Activated T-helper 2 cell treated with anti-CD3 and anti-CD28 coated beads, Interferon-gamma antibody, Interleukin-2, Interleukin-4, amounts not matched to agents 10 μg/mL and 5 μg/mL and 100 μg/mL, durations not matched to agents 14 hours and 24 hours and 36 hours (primary cell): ENCODE measurements at regions of chr3 and their contacts with region 1.

Region 1: GRCh38 chr3:157618075-157618760 is 115.0 kb upstream of the VEPH1 start:
- DNase-seq: no peak
- H3K4me3 Mint-ChIP-seq: no peak overlapping the region
- H3K27ac Mint-ChIP-seq: no peak overlapping the region
- H3K4me1 Mint-ChIP-seq: peaks cover 6% of the 10 kb centered on the region
- H3K27me3 Mint-ChIP-seq: peaks cover 11% of the 10 kb centered on the region

Region 2: GRCh38 chr3:157460253-157460652 is 158.0 kb before region 1 on chr3:
- intact Hi-C with region 1: no loop called
- DNase-seq: no peak
- H3K4me3 Mint-ChIP-seq: no peak overlapping the region
- H3K27ac Mint-ChIP-seq: no peak overlapping the region
- H3K4me1 Mint-ChIP-seq: no peaks in the 10 kb centered on the region
- H3K27me3 Mint-ChIP-seq: peaks cover 2% of the 10 kb centered on the region

Region 3: GRCh38 chr3:158103081-158103886 is 485.1 kb after region 1 on chr3:
- intact Hi-C with region 1: loop called (anchors 5 kb)
- DNase-seq: no peak
- H3K4me3 Mint-ChIP-seq: no peak overlapping the region
- H3K27ac Mint-ChIP-seq: peak overlapping the region; percentile 71
- H3K4me1 Mint-ChIP-seq: peaks cover 31% of the 10 kb centered on the region
- H3K27me3 Mint-ChIP-seq: peaks cover 90% of the 10 kb centered on the region

Region 4: GRCh38 chr3:158167737-158168471 is 549.7 kb after region 1 on chr3:
- intact Hi-C with region 1: no loop called
- DNase-seq: no peak
- H3K4me3 Mint-ChIP-seq: no peak overlapping the region
- H3K27ac Mint-ChIP-seq: no peak overlapping the region
- H3K4me1 Mint-ChIP-seq: peaks cover 7% of the 10 kb centered on the region
- H3K27me3 Mint-ChIP-seq: no peaks in the 10 kb centered on the region

Region 5: DNA sequence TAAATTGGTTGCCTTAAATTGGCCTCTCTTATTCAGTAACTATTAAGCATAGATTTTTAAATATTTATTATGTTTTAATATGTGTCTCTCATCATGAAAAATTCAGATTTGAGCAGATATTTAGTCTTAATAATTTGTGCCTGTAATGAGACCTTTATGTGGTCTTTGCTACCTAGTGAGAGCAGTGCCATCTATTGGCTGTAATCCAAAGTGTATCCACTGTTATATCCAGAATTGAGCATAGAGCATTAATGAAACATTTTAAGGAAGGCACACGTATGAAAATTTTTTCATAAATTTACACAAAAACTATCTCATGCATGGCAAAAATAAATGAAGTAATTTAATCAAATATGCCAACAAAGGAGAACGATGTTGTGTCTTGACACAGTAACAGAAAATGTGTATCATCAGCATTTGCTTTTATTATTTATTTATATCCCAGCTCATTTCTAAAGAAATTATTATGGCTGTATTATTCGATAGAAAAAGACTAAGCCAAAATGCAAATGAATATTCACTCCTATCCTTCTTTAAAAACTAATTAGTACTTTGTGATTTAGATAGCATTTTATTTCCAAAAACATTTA is 695.2 kb after region 1 on chr3:
- intact Hi-C with region 1: loop called (anchors 5 kb)
- DNase-seq: no peak
- H3K4me3 Mint-ChIP-seq: no peak overlapping the region
- H3K27ac Mint-ChIP-seq: no peak overlapping the region
- H3K4me1 Mint-ChIP-seq: no peaks in the 10 kb centered on the region
- H3K27me3 Mint-ChIP-seq: no peaks in the 10 kb centered on the region

Region 6: GRCh38 chr3:158434412-158435038 is 816.3 kb after region 1 on chr3:
- intact Hi-C with region 1: loop called (anchors 1 kb)
- DNase-seq: peak; percentile 9
- H3K4me3 Mint-ChIP-seq: no peak overlapping the region
- H3K27ac Mint-ChIP-seq: no peak overlapping the region
- H3K4me1 Mint-ChIP-seq: no peaks in the 10 kb centered on the region
- H3K27me3 Mint-ChIP-seq: no peaks in the 10 kb centered on the region

Region 7: GRCh38 chr3:158532099-158532734 is 914.0 kb after region 1 on chr3:
- intact Hi-C with region 1: loop called (anchors 2 kb)
- DNase-seq: no peak
- H3K4me3 Mint-ChIP-seq: no peak overlapping the region
- H3K27ac Mint-ChIP-seq: no peak overlapping the region
- H3K4me1 Mint-ChIP-seq: no peaks in the 10 kb centered on the region
- H3K27me3 Mint-ChIP-seq: no peaks in the 10 kb centered on the region